Tibial artery (tissue), 4 donors: ENCODE measurements at regions of chr14 and their contacts with region 1.

Region 1: DNA sequence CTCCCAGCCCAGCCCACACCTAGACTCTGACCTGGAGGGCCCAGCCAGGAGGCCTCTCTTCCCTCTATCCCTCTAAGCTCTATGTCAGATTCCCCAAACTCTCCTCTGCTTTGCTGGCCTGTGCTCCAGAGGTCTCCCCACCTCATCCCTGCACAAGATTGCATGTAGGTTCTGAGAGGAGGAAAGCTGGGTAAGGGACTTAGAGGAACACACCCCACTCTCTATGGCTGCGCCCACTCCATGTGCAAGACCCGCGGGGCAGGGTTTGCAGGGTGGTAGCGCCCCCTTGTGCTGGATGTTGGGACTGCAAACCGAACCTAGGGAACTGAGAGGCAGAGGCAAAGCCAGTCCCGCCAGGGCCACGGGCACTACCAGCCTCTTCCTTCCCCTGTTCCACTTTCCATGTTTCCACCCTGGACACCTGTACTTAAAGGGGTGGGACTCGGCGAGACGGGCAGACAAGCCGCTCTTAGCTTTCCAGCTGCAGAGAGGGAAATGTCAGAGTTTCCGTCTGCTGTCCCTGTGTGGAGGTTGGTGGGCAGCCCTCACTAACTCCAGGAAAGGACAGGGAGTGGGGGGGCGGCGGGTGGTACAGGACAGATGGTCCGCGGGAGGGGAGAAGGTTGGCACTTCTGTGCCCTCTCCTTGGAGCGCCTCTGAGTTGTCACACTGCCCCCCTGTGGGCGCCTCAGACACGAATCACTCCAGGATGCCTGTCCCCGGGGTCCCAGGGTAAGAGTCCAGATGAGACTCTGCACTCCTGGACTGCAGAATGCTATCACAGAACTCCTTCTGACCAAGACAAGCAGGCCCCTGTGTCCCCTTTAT is 16.8 kb downstream of the MMP14 start:
- DNase-seq: peak; percentile 94 to 95
- H3K4me3 ChIP-seq: peak overlapping the region; percentile 28 to 42
- H3K27ac ChIP-seq: peak overlapping the region; percentile 92 to 97
- H3K4me1 ChIP-seq: peaks cover 5 to 55% (median 52%) of the 10 kb centered on the region in 4 donors
- H3K27me3 ChIP-seq: no peaks in the 10 kb centered on the region
- CTCF ChIP-seq: peak; percentile 81 to 96

Region 2: DNA sequence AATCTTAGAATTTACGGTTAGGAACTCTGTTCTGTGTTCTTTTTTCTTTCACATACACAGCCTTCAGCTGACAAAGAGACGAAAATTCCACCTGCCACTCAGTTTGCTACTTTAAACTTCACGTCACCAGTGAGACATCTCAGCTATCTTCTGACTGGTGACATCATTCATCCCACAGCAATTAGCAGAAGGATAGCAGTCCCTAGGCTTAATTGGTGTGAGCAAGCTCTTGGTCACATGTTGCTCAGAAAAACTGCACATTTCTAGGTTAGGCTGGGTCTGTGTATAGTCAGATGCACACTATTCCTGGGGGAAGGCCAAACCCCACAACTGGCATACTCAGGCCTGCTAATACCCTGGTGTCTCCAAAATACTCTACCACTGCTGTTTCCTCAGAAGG is 61.9 kb before region 1 on chr14:
- intact Hi-C with region 1: no loop called
- DNase-seq: no peak
- H3K4me3 ChIP-seq: no peak overlapping the region
- H3K27ac ChIP-seq: no peak overlapping the region
- H3K4me1 ChIP-seq: no peaks in the 10 kb centered on the region
- H3K27me3 ChIP-seq: no peaks in the 10 kb centered on the region
- CTCF ChIP-seq: no peak

Region 3: GRCh38 chr14:22819151-22819988 is 33.8 kb before region 1 on chr14:
- intact Hi-C with region 1: loop called (anchors 1 kb)
- DNase-seq: peak; percentile 74 to 85
- H3K4me3 ChIP-seq: peak overlapping the region; percentile 33 to 37
- H3K27ac ChIP-seq: peak overlapping the region; percentile 64 to 78
- H3K4me1 ChIP-seq: peaks cover 0 to 52% (median 33%) of the 10 kb centered on the region in 4 donors
- H3K27me3 ChIP-seq: no peaks in the 10 kb centered on the region
- CTCF ChIP-seq: no peak

Region 4: GRCh38 chr14:22836301-22837113 is 16.6 kb before region 1 on chr14 and contains the start of gene MMP14:
- intact Hi-C with region 1: loop called (anchors 2 kb)
- DNase-seq: peak; percentile 93 to 97
- H3K4me3 ChIP-seq: peak within 1 kb of the TSS; percentile 84 to 85
- H3K27ac ChIP-seq: peak within 1 kb of the TSS; percentile 97 to 98
- H3K4me1 ChIP-seq: peaks cover 0 to 41% (median 26%) of the 10 kb centered on the region in 4 donors
- H3K27me3 ChIP-seq: no peaks in the 10 kb centered on the region
- CTCF ChIP-seq: peak; percentile 50 to 73

Region 5: GRCh38 chr14:23047034-23047634 is 194.0 kb after region 1 on chr14:
- intact Hi-C with region 1: no loop called
- DNase-seq: no peak
- H3K4me3 ChIP-seq: no peak overlapping the region
- H3K27ac ChIP-seq: no peak overlapping the region
- H3K4me1 ChIP-seq: no peaks in the 10 kb centered on the region
- H3K27me3 ChIP-seq: peaks cover 0 to 3% of the 10 kb centered on the region in 2 donors
- CTCF ChIP-seq: no peak

Region 6: DNA sequence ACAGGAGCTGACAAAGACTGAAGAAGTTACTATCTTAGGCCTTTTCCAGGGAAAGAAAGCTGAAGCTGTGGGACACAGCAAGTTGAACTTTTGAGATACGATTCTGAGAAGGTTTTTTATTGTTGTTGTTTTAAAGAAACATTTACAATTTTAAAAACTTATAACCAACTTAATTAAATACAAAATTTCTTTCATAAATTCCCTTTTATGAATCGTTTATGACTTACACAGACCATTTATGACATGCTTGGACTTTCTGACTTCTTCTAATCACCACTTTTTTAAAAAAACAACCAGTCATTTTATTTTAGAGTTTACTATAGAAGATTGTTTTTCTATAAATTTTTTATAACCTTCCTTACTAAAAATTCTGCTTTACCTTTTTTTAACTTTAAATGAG is 851.7 kb after region 1 on chr14:
- intact Hi-C with region 1: no loop called
- DNase-seq: no peak
- H3K4me3 ChIP-seq: no peak overlapping the region
- H3K27ac ChIP-seq: no peak overlapping the region
- H3K4me1 ChIP-seq: no peaks in the 10 kb centered on the region
- H3K27me3 ChIP-seq: no peaks in the 10 kb centered on the region
- CTCF ChIP-seq: no peak